ENCODE measurements at regions of chr2 and their contacts with region 1.

Region 1: GRCh38 chr2:117771969-117772630 is 42.4 kb upstream of the DDX18 start:
- DNase-seq: no peak
- ATAC-seq: peak in 3 of 4 donors; percentile 56 to 70 (median 59)
- H3K4me3 ChIP-seq: no peak overlapping the region
- H3K27ac ChIP-seq: no peak overlapping the region
- H3K4me1 ChIP-seq: no peaks in the 10 kb centered on the region
- H3K27me3 ChIP-seq: no peaks in the 10 kb centered on the region
- CTCF ChIP-seq: peak in 1 of 4 donors; percentile 11

Region 2: GRCh38 chr2:117470311-117471095 is 301.6 kb before region 1 on chr2:
- intact Hi-C with region 1: loop called in 1 of 3 experiments (anchors 10 kb)
- DNase-seq: peak in 3 of 6 donors; percentile 11 to 49 (median 22)
- ATAC-seq: peak in 3 of 4 donors; percentile 45 to 71 (median 67)
- H3K4me3 ChIP-seq: no peak overlapping the region
- H3K27ac ChIP-seq: no peak overlapping the region
- H3K4me1 ChIP-seq: no peaks in the 10 kb centered on the region
- H3K27me3 ChIP-seq: no peaks in the 10 kb centered on the region
- CTCF ChIP-seq: peak in 3 of 4 donors; percentile 27 to 45 (median 39)

Region 3: DNA sequence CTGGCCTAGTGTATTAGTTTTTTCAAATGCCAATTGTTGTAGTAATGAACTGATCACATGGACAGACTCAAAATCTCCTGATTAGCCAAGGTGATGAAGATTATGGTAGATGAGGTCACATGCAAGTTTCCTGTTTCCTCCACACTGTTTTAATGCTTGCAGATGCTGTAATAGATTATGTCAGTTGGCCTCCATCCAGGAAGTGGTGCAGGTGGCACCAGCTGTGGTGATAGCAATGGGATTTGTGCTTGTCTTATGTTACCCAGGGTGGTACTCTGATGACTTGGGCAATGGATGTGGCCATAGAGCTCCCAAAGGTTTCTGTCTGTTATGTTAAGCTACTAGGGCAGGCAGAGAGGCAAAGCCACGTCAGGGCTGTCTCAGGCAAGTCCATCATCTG is 290.5 kb before region 1 on chr2:
- intact Hi-C with region 1: loop called in 2 of 3 experiments (anchors 10 kb)
- DNase-seq: no peak
- ATAC-seq: no peak
- H3K4me3 ChIP-seq: no peak overlapping the region
- H3K27ac ChIP-seq: no peak overlapping the region
- H3K4me1 ChIP-seq: no peaks in the 10 kb centered on the region
- H3K27me3 ChIP-seq: no peaks in the 10 kb centered on the region
- CTCF ChIP-seq: no peak

Measured in pancreas (tissue), 10 donors.